ENCODE measurements at regions of chr6 and their contacts with region 1.

Region 1: GRCh38 chr6:11496152-11497060 is 41.1 kb upstream of the TMEM170B start:
- DNase-seq: peak; percentile 78
- ATAC-seq: peak; percentile 97
- H3K4me3 Mint-ChIP-seq: no peak overlapping the region
- H3K27ac Mint-ChIP-seq: peak overlapping the region; percentile 32
- H3K4me1 Mint-ChIP-seq: peaks cover 12% of the 10 kb centered on the region
- H3K27me3 Mint-ChIP-seq: no peaks in the 10 kb centered on the region
- CTCF ChIP-seq: peak; percentile 98

Region 2: GRCh38 chr6:10954590-10955010 is 541.8 kb before region 1 on chr6:
- CTCF ChIA-PET with region 1: interaction called, 6 read pairs
- POLR2A ChIA-PET with region 1: no interaction called
- intact Hi-C with region 1: loop called (anchors 5 kb)
- DNase-seq: peak; percentile 83
- ATAC-seq: peak; percentile 89
- H3K4me3 Mint-ChIP-seq: no peak overlapping the region
- H3K27ac Mint-ChIP-seq: no peak overlapping the region
- H3K4me1 Mint-ChIP-seq: no peaks in the 10 kb centered on the region
- H3K27me3 Mint-ChIP-seq: peaks cover 6% of the 10 kb centered on the region
- CTCF ChIP-seq: peak; percentile 81

Region 3: GRCh38 chr6:11149551-11149950 is 346.9 kb before region 1 on chr6:
- CTCF ChIA-PET with region 1: interaction called, 86 read pairs
- POLR2A ChIA-PET with region 1: interaction called, 10 read pairs
- intact Hi-C with region 1: loop called (anchors 1 kb)
- DNase-seq: no peak
- ATAC-seq: no peak
- H3K4me3 Mint-ChIP-seq: no peak overlapping the region
- H3K27ac Mint-ChIP-seq: no peak overlapping the region
- H3K4me1 Mint-ChIP-seq: peaks cover 7% of the 10 kb centered on the region
- H3K27me3 Mint-ChIP-seq: no peaks in the 10 kb centered on the region
- CTCF ChIP-seq: no peak

Region 4: DNA sequence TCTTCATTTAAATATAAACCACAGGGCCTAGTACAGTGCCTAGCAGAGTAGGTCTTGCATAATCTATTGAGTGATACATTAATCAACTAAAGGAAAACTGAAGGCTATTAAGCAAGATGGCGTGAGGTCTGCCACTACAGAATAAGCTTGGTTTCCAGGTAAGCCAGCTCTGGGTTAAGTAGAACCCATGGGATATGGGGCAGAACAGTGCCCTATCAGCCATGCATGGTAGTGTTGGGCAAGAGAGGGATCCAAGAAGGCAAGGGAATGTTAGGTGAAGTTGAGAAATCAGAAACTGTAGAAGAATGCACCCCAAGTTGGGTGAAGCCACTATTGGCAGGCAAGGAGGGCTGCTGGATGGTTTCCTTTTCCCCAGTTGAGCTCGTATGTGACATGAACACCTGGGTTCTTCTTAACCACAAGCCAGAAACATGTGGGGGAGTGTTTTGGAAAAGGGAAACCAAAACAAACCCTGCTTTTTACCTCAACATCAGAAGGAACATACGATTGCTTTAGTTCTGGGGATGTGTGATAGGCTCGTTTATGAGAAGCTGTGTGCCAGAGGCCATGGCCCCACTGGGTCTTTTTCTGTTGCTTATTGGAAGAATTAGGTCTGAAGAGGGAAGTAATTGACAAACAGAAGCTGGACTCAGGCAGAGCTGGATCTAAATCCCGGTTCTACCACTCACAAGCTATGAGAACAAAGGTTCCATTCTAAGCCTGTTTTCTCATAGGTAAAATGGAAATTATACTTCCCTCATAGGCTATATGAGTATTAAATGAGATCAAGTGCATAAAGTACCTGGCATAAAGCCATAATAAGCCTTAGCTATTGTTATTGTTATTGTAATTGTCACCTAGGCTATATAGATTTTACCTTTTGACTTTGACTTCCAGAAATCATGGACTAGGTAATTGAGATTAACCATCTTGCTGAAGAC is 297.5 kb before region 1 on chr6:
- CTCF ChIA-PET with region 1: interaction called, 11 read pairs
- POLR2A ChIA-PET with region 1: no interaction called
- intact Hi-C with region 1: no loop called
- DNase-seq: peak; percentile 58
- ATAC-seq: peak; percentile 70
- H3K4me3 Mint-ChIP-seq: no peak overlapping the region
- H3K27ac Mint-ChIP-seq: peak overlapping the region; percentile 84
- H3K4me1 Mint-ChIP-seq: peaks cover 58% of the 10 kb centered on the region
- H3K27me3 Mint-ChIP-seq: no peaks in the 10 kb centered on the region
- CTCF ChIP-seq: no peak

Region 5: GRCh38 chr6:11381801-11382513 is 114.4 kb before region 1 on chr6:
- CTCF ChIA-PET with region 1: interaction called, 40 read pairs
- POLR2A ChIA-PET with region 1: no interaction called
- intact Hi-C with region 1: loop called (anchors 5 kb)
- DNase-seq: peak; percentile 84
- ATAC-seq: peak; percentile 93
- H3K4me3 Mint-ChIP-seq: peak overlapping the region; percentile 82
- H3K27ac Mint-ChIP-seq: peak overlapping the region; percentile 98
- H3K4me1 Mint-ChIP-seq: peaks cover 62% of the 10 kb centered on the region
- H3K27me3 Mint-ChIP-seq: no peaks in the 10 kb centered on the region
- CTCF ChIP-seq: no peak

Region 6: DNA sequence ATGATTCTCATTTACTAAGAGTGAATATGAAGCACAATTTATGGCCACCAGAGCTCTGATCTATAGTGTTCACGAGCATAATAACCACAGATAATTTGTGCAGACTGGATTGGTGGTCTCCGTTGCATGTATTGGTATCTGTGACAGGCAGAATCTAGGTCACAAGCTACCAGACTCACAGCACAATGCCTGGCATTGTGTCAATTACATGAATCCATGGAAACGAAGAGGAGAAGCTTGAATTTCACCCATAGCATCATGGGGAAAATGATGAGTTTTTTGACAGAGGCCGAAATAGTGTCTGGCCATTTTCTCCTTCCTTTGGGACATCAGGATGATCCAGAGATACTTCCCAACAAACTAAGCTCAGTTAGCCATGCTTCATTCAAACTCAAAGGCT is 11.1 kb before region 1 on chr6:
- CTCF ChIA-PET with region 1: interaction called, 29 read pairs
- POLR2A ChIA-PET with region 1: no interaction called
- intact Hi-C with region 1: no loop called
- DNase-seq: no peak
- ATAC-seq: no peak
- H3K4me3 Mint-ChIP-seq: no peak overlapping the region
- H3K27ac Mint-ChIP-seq: no peak overlapping the region
- H3K4me1 Mint-ChIP-seq: no peaks in the 10 kb centered on the region
- H3K27me3 Mint-ChIP-seq: peaks cover 2% of the 10 kb centered on the region
- CTCF ChIP-seq: no peak

Measured in activated CD8-positive, alpha-beta T cell treated with anti-CD3 and anti-CD28 coated beads for 36 hours (primary cell).